ENCODE measurements at regions of chr5 and their contacts with region 1.

Region 1: GRCh38 chr5:165209086-165209727 is 1703.8 kb downstream of the MAT2B start:
- DNase-seq: no peak
- ATAC-seq: no peak

Region 2: GRCh38 chr5:163564321-163564938 is 1644.8 kb before region 1 on chr5:
- intact Hi-C with region 1: loop called in 1 of 2 experiments (anchors 10 kb)
- DNase-seq: peak; percentile 29
- ATAC-seq: peak in 1 of 2 donors; percentile 50

Region 3: GRCh38 chr5:164013077-164013670 is 1196.0 kb before region 1 on chr5:
- intact Hi-C with region 1: loop called in 1 of 2 experiments (anchors 10 kb)
- DNase-seq: peak; percentile 27
- ATAC-seq: peak; percentile 33 to 47